Activated naive CD4-positive, alpha-beta T cell treated with anti-CD3 and anti-CD28 coated beads for 36 hours (primary cell): ENCODE measurements at regions of chr1 and their contacts with region 1.

Region 1: DNA sequence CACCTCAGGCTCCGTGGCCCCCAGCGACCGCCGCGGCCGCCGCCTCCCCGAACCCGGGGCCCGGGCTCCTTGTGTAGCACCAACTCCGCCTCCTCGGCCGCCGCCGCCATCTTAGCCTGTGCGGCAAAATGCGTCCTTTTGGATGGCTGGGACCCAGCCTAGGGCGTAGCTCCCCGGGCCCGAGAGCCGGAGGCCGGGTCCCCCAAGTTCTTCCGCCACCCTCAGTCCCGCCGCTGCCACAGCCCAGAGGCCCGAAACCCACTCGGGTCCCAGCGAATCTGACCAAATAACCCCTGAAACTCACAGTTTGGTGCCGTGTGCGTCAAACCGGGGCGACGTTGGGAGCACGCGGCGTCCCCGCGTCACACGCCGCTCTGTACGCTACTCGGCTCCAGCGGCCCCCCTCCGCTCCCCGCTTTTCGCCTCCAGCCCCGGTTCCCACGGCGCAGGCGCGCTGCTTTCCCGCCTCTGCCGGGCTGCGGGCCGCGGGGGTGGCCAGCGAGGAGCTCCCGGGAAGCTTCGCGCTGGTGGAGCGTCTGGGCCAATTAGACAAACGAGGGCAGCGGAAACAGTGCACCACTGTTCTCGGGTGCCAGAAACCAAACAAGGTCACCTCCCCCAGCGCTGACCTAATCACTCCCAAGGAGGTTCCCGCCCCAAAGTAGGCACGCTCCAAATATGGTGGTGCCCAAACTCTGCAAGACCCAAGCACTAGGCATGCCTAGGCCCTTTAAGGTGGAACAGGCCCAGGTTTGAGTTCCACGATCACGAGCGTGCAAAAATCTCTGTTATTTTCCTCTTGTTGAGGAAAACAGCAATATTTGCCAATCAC is at the start of gene ZNF644:
- DNase-seq: peak; percentile 97
- H3K4me3 Mint-ChIP-seq: peak within 1 kb of the TSS; percentile 91
- H3K27ac Mint-ChIP-seq: peak within 1 kb of the TSS; percentile 96
- H3K4me1 Mint-ChIP-seq: peaks cover 72% of the 10 kb centered on the region
- H3K27me3 Mint-ChIP-seq: no peaks in the 10 kb centered on the region
- total RNA-seq, gene ZNF644: 42.4 to 42.8 TPM

Region 2: GRCh38 chr1:89843281-89844121 is 1178.4 kb before region 1 on chr1:
- CTCF ChIA-PET with region 1: no interaction called
- intact Hi-C with region 1: loop called (anchors 10 kb)
- DNase-seq: peak; percentile 86
- H3K4me3 Mint-ChIP-seq: peak overlapping the region; percentile 91
- H3K27ac Mint-ChIP-seq: peak overlapping the region; percentile 94
- H3K4me1 Mint-ChIP-seq: peaks cover 47% of the 10 kb centered on the region
- H3K27me3 Mint-ChIP-seq: no peaks in the 10 kb centered on the region

Region 3: GRCh38 chr1:90308421-90308820 is 713.5 kb before region 1 on chr1:
- CTCF ChIA-PET with region 1: no interaction called
- intact Hi-C with region 1: no loop called
- DNase-seq: no peak
- H3K4me3 Mint-ChIP-seq: no peak overlapping the region
- H3K27ac Mint-ChIP-seq: no peak overlapping the region
- H3K4me1 Mint-ChIP-seq: no peaks in the 10 kb centered on the region
- H3K27me3 Mint-ChIP-seq: no peaks in the 10 kb centered on the region

Region 4: DNA sequence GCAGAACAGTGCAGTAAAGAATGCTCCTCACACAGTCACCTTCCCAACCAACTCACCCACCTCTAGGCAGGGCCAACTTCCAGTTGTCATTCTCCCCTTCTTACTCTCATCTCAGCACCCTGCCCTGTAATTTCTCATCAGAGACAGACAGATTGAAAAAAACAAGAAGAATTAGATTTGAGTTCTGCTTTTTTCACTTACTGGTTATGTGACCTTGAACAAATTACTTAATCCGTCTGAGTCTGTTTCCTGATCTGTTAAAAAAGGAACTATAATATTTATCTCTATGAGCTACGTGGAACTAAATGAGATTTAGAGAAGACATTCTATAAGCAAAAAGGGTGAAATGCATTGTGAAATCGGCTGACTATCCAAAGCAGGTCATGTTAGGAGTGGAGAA is 696.7 kb before region 1 on chr1:
- CTCF ChIA-PET with region 1: no interaction called
- intact Hi-C with region 1: no loop called
- DNase-seq: no peak
- H3K4me3 Mint-ChIP-seq: no peak overlapping the region
- H3K27ac Mint-ChIP-seq: no peak overlapping the region
- H3K4me1 Mint-ChIP-seq: no peaks in the 10 kb centered on the region
- H3K27me3 Mint-ChIP-seq: no peaks in the 10 kb centered on the region

Region 5: DNA sequence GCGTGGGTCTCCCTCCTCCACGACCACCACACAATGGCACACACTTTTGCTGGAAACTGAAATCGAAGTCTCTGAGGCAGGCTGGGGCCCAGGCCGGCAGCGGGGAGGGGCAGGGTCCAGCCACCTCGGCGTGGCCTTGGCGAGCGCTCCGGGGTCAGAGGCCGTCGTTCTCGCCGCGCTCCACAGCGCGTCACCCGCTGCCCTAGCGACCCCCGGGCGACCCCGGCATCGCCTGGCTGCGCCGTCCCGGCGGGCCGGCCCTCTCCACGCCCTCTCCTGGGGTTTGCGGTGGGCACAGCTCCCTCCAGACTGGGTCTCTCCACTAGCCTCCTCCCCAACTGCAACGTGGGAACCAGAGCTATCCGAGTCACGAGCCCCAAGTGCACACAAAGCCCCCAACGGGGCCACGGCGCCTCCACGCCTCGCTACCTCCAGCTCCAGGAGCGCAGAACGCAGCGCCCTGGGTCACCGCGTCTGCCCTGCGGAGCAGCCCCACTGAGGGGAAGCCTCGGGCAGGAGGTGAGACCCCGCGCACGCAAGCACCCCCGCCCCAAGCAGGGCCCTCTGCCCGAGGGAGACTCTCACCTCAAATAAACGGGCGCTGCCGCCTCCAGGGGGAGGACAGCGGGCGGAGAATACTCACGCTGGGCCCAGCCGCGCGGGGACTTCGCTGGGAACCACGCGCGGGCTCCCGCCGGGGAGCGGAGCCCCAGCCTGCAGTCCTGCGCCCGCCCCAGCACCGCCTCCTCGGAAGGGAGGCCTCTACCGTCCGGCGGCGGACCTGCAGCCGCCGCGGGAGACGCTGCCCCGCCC is 170.8 kb before region 1 on chr1:
- CTCF ChIA-PET with region 1: no interaction called
- intact Hi-C with region 1: loop called (anchors 2 kb)
- DNase-seq: peak; percentile 79
- H3K4me3 Mint-ChIP-seq: peak overlapping the region; percentile 69
- H3K27ac Mint-ChIP-seq: no peak overlapping the region
- H3K4me1 Mint-ChIP-seq: peaks cover 12% of the 10 kb centered on the region
- H3K27me3 Mint-ChIP-seq: peaks cover 39% of the 10 kb centered on the region

Region 6: DNA sequence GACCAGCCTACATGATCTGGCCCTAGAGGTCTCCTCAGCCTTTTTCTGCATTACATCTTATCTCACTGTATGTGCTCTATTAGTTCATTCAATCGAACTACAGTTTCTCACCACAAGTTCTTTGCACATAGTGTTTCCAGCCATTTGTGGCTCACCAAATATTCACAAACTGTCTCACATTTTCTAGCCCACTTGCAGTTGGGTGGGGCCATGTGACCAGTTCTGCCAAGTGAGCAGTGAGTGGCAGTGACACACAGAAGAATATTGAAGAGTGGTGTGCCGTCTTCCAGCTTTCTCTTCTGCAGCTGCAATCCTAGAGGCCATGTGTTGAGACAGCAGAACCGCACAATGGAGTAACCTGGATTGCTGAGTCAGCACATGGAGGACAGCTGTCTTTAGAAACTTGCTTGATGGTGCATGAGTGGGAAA is 103.1 kb after region 1 on chr1:
- CTCF ChIA-PET with region 1: no interaction called
- intact Hi-C with region 1: loop called (anchors 2 kb)
- DNase-seq: peak; percentile 36
- H3K4me3 Mint-ChIP-seq: no peak overlapping the region
- H3K27ac Mint-ChIP-seq: no peak overlapping the region
- H3K4me1 Mint-ChIP-seq: peaks cover 13% of the 10 kb centered on the region
- H3K27me3 Mint-ChIP-seq: no peaks in the 10 kb centered on the region

Region 7: GRCh38 chr1:91500756-91501522 is 479.0 kb after region 1 on chr1 and contains the start of gene CDC7:
- CTCF ChIA-PET with region 1: no interaction called
- intact Hi-C with region 1: loop called (anchors 1 kb)
- DNase-seq: peak; percentile 87
- H3K4me3 Mint-ChIP-seq: no peak within 1 kb of the TSS
- H3K27ac Mint-ChIP-seq: no peak within 1 kb of the TSS
- H3K4me1 Mint-ChIP-seq: peaks cover 15% of the 10 kb centered on the region
- H3K27me3 Mint-ChIP-seq: no peaks in the 10 kb centered on the region
- total RNA-seq, gene CDC7: 27.0 TPM

Region 8: DNA sequence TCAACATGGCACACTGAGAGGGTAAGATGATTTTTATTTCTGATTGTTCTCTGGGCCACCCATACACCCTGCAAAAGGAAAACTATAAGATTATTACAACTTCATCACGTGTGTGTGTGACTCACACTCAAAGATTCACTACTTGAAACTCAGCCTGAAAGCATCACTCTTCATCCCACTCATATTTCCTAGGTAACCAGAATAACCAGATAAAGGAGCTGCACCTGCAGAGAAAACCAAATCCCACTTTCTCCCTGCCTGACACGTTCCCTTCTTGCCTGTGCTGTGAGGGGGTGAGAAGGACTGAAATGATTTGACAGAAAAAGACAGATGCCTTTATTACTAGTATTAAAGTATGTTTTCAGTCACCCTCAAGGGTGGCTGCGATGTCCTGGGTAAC is 732.4 kb after region 1 on chr1:
- CTCF ChIA-PET with region 1: no interaction called
- intact Hi-C with region 1: loop called (anchors 5 kb)
- DNase-seq: peak; percentile 81
- H3K4me3 Mint-ChIP-seq: no peak overlapping the region
- H3K27ac Mint-ChIP-seq: peak overlapping the region; percentile 70
- H3K4me1 Mint-ChIP-seq: peaks cover 37% of the 10 kb centered on the region
- H3K27me3 Mint-ChIP-seq: peaks cover 4% of the 10 kb centered on the region

Region 9: DNA sequence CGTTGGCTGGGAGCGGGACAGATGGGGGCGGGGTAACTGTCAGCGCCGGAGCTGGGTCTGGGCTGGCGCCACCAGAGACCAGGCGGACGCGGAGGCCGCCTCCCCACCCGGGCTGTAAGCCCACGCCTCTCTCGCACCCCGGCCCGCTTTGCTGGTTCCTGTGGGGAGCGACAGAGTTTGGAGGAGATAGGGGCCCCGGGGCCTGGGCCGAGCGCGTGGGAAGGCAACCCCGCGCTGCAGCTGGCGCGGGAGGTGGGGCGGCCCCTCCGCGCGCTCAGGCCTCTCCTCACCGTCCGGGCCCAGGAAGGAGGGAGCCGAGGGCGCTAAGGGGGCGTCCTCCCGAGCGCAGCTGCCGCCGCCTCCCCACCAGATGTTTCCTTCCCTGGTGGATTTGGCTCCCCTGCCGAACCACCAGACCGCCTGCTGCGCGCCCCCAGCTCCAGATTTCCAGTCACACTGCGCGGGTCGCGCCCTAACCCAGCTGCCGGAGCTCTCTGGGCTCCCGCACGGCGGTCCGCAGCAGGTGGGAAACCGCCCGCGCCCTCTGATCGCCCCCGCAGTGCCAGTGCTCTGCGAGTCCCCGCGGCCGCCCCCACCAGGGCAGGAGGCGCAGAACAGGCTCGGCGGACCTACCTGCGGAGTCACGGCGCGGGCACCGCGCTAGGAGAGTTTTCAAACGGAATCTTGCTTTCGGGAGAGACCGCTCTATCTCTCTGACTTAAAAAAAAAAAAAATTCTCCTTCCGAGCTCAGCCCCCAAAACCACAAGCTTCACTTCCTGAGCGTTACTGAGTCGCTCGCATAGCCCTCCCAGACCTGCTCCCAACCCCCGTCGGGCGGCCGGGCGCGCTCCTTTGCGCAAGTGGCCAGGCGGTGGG is 1463.7 kb after region 1 on chr1:
- CTCF ChIA-PET with region 1: no interaction called
- intact Hi-C with region 1: loop called (anchors 5 kb)
- DNase-seq: peak; percentile 91
- H3K4me3 Mint-ChIP-seq: peak overlapping the region; percentile 90
- H3K27ac Mint-ChIP-seq: peak overlapping the region; percentile 93
- H3K4me1 Mint-ChIP-seq: peaks cover 38% of the 10 kb centered on the region
- H3K27me3 Mint-ChIP-seq: no peaks in the 10 kb centered on the region